ENCODE measurements at regions of chr1 and their contacts with region 1.

Region 1: DNA sequence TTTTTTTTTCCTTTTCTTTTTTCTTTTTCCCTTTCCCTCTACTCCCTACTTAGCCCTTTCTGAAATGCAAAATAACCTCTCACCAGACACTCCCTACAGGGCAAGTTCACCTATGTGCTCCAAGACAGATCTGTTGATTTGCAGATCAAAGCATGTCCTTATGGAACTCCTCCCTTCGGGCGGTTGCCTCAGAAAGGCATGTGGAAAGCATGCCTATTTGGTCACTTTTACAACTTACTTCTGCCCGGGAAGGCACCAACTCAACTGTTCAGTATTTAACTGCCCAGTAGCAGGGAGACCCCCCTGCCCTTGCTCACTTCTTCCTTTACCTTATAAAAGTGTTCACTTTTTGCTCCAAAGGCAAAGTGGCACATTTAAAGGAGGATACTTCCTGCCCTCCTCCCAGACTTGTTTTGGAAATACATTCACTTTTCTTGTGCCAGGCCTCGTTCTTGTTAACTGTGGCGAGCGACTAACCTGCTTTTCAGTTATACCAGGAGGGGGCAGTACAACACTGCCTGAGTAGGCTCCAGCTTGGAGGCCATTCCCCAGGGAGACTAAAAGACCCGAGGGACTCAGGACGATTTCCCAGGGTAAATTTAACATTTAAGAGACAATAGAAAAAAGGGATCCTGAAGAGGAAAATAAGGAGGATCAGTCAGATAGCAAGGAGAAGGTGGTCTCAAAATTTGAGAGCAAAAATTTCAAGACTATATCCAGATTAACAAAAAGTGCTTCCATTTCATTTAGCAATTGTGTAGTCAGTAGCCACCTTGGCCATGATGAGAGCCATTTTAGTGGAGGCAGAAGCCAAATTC is 12.3 kb upstream of the SLAMF7 start:
- DNase-seq: peak; percentile 74
- ATAC-seq: peak; percentile 79
- H3K4me3 Mint-ChIP-seq: no peak overlapping the region
- H3K27ac Mint-ChIP-seq: no peak overlapping the region
- H3K4me1 Mint-ChIP-seq: peaks cover 32% of the 10 kb centered on the region
- H3K27me3 Mint-ChIP-seq: no peaks in the 10 kb centered on the region
- CTCF ChIP-seq: peak; percentile 99

Region 2: DNA sequence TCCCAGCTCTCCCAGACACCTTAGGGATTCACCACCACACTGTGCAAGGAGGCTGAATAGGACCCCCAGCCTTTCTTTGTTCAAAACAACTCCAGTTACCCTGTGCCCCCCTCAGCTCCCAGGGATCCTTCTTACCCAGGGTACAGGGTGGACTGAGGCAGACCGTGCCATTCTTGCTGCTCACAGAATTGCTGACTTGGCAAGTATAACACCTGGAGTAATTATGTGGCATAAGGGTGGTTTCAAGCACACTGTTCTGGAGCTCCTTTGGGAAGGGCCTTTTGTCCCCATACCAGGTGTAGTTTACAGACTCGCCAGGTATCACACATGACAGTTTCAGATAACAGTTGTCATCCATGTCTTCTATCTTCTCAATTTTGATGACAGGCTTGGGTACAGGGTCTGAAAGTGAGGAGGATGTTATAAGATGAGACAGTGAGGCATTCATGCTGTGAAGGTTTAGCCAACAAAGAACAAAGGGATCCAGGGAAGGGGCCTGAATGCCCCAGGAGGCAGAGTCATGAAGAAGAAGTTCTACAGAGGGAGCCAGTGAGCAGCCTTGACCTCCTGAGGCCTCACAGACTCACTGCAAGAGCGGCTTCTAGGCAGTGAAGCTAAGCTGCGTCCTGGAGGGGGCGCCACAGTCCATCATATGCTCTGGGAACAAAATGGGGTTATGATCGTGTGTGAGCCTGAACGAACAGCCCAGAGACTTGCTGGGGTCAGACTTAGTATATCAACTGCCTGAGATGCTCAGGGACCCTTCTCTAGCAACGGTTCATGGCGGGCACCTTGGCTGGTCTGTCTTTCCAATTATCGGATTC is 45.4 kb before region 1 on chr1:
- CTCF ChIA-PET with region 1: interaction called, 82 read pairs
- POLR2A ChIA-PET with region 1: interaction called, 5 read pairs
- intact Hi-C with region 1: loop called (anchors 5 kb)
- DNase-seq: peak; percentile 96
- ATAC-seq: peak; percentile 74
- H3K4me3 Mint-ChIP-seq: no peak overlapping the region
- H3K27ac Mint-ChIP-seq: peak overlapping the region; percentile 95
- H3K4me1 Mint-ChIP-seq: peaks cover 67% of the 10 kb centered on the region
- H3K27me3 Mint-ChIP-seq: no peaks in the 10 kb centered on the region
- CTCF ChIP-seq: peak; percentile 97

Region 3: GRCh38 chr1:160739098-160739511 is 12.4 kb after region 1 on chr1 and contains the start of gene SLAMF7:
- CTCF ChIA-PET with region 1: interaction called, 16 read pairs
- POLR2A ChIA-PET with region 1: interaction called, 18 read pairs
- intact Hi-C with region 1: no loop called
- DNase-seq: peak; percentile 82
- ATAC-seq: peak; percentile 75
- H3K4me3 Mint-ChIP-seq: peak within 1 kb of the TSS; percentile 84
- H3K27ac Mint-ChIP-seq: peak within 1 kb of the TSS; percentile 94
- H3K4me1 Mint-ChIP-seq: peaks cover 75% of the 10 kb centered on the region
- H3K27me3 Mint-ChIP-seq: no peaks in the 10 kb centered on the region
- CTCF ChIP-seq: no peak
- total RNA-seq, gene SLAMF7: 90.0 to 93.5 TPM

Region 4: GRCh38 chr1:160806109-160806665 is 79.5 kb after region 1 on chr1:
- CTCF ChIA-PET with region 1: interaction called, 10 read pairs
- POLR2A ChIA-PET with region 1: interaction called, 3 read pairs
- intact Hi-C with region 1: no loop called
- DNase-seq: no peak
- ATAC-seq: peak; percentile 45
- H3K4me3 Mint-ChIP-seq: no peak overlapping the region
- H3K27ac Mint-ChIP-seq: peak overlapping the region; percentile 82
- H3K4me1 Mint-ChIP-seq: peaks cover 83% of the 10 kb centered on the region
- H3K27me3 Mint-ChIP-seq: no peaks in the 10 kb centered on the region
- CTCF ChIP-seq: peak; percentile 46